K562 (cell line): ENCODE measurements at regions of chr9 and their contacts with region 1.

Region 1: DNA sequence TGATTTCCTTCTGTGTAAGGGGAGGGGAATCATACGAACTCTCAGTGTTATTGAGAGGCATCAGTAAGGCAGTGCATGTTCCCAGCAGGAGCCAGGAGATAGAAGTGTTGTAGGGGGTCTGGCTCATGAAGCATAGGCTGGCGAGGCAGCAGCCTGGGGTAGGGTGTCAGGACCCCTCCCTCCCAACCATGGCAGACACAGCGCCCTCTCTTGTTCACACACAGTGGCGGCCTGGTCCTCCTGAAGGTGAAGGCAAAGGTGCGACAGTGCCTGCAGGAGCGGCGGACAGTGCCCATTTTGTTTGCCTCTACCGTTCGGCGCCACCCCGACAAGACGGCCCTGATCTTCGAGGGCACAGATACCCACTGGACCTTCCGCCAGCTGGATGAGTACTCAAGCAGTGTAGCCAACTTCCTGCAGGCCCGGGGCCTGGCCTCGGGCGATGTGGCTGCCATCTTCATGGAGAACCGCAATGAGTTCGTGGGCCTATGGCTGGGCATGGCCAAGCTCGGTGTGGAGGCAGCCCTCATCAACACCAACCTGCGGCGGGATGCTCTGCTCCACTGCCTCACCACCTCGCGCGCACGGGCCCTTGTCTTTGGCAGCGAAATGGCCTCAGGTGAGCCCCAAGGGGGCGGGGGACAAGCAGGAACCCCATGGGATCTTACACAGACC is 4.7 kb downstream of the SLC27A4 start:
- DNase-seq: peak in 1 of 4 experiments; percentile 35
- ATAC-seq: no peak
- H3K4me3 ChIP-seq: no peak overlapping the region
- H3K27ac ChIP-seq: no peak overlapping the region
- H3K4me1 ChIP-seq: peaks cover 6 to 14% of the 10 kb centered on the region in 2 experiments; a peak in 4 of 5 replicates
- H3K27me3 ChIP-seq: no peaks in the 10 kb centered on the region
- CTCF ChIP-seq: peak in 1 of 3 experiments; percentile 17; a peak in 1 of 6 replicates
- EP300 ChIP-seq: no peak
- POLR2A ChIP-seq: no peak
- RAD21 ChIP-seq: no peak

Region 2: GRCh38 chr9:128455849-128456612 is 111.0 kb after region 1 on chr9 and contains the start of gene ODF2:
- CTCF ChIA-PET with region 1: no interaction called
- POLR2A ChIA-PET with region 1: no interaction called
- in situ Hi-C with region 1: no loop called
- intact Hi-C with region 1: no loop called
- DNase-seq: peak; percentile 98 to 99 (median 99)
- ATAC-seq: peak; percentile 96
- H3K4me3 ChIP-seq: peak within 1 kb of the TSS; percentile 79
- H3K27ac ChIP-seq: peak within 1 kb of the TSS; percentile 80
- H3K4me1 ChIP-seq: peaks cover 6 to 26% of the 10 kb centered on the region in 2 experiments; a peak in 3 of 5 replicates
- H3K27me3 ChIP-seq: no peaks in the 10 kb centered on the region
- CTCF ChIP-seq: 0 out of 6 replicates have a peak, but pooled peaks of 1 of the 3 experiments have one; percentile 1
- EP300 ChIP-seq: 0 out of 2 replicates have a peak, but pooled peaks have one; percentile 4
- POLR2A ChIP-seq: peak; percentile 87
- RAD21 ChIP-seq: no peak
- polyA plus RNA-seq, gene ODF2: 16.5 to 69.7 TPM

Region 3: GRCh38 chr9:128696923-128697707 is 352.0 kb after region 1 on chr9:
- CTCF ChIA-PET with region 1: no interaction called
- POLR2A ChIA-PET with region 1: interaction called, 65 read pairs
- in situ Hi-C with region 1: loop called (anchors 5 kb)
- intact Hi-C with region 1: no loop called
- DNase-seq: no peak
- ATAC-seq: peak; percentile 49
- H3K4me3 ChIP-seq: no peak overlapping the region
- H3K27ac ChIP-seq: peak overlapping the region; percentile 33; the same call in 1 of the 3 replicates
- H3K4me1 ChIP-seq: peaks cover 0 to 5% of the 10 kb centered on the region in 2 experiments; a peak in 2 of 5 replicates
- H3K27me3 ChIP-seq: no peaks in the 10 kb centered on the region
- CTCF ChIP-seq: no peak
- EP300 ChIP-seq: no peak
- POLR2A ChIP-seq: peak; percentile 73
- RAD21 ChIP-seq: no peak

Region 4: GRCh38 chr9:128702445-128702948 is 357.4 kb after region 1 on chr9 and contains the start of gene PKN3:
- CTCF ChIA-PET with region 1: no interaction called
- POLR2A ChIA-PET with region 1: interaction called, 65 read pairs
- in situ Hi-C with region 1: loop called (anchors 5 kb)
- intact Hi-C with region 1: no loop called
- DNase-seq: peak; percentile 90 to 97 (median 92)
- ATAC-seq: peak; percentile 91
- H3K4me3 ChIP-seq: peak within 1 kb of the TSS; percentile 69
- H3K27ac ChIP-seq: peak within 1 kb of the TSS; percentile 71
- H3K4me1 ChIP-seq: peaks cover 9 to 43% of the 10 kb centered on the region in 2 experiments
- H3K27me3 ChIP-seq: no peaks in the 10 kb centered on the region
- CTCF ChIP-seq: peak; percentile 73 to 96 (median 89)
- EP300 ChIP-seq: no peak; the same call in 1 of the 2 replicates
- POLR2A ChIP-seq: peak; percentile 75
- RAD21 ChIP-seq: peak; percentile 57 to 58
- polyA plus RNA-seq, gene PKN3: 0.82 to 1.4 TPM